Heart left ventricle (tissue), 16 donors: ENCODE measurements at regions of chr10 and their contacts with region 1.

Region 1: GRCh38 chr10:3785257-3785850 is 345 bp upstream of the KLF6 start:
- DNase-seq: peak; percentile 99 to 100 (median 99)
- ATAC-seq: peak; percentile 80 to 91 (median 82)
- H3K4me3 ChIP-seq: peak overlapping the region; percentile 66 to 100 (median 96)
- H3K27ac ChIP-seq: peak overlapping the region; percentile 98 to 100 (median 100)
- H3K4me1 ChIP-seq: peaks cover 0 to 35% (median 20%) of the 10 kb centered on the region in 12 donors
- H3K27me3 ChIP-seq: no peaks in the 10 kb centered on the region
- CTCF ChIP-seq: peak in 1 of 12 donors; percentile 21
- POLR2A ChIP-seq: peak; percentile 99 to 100

Region 2: DNA sequence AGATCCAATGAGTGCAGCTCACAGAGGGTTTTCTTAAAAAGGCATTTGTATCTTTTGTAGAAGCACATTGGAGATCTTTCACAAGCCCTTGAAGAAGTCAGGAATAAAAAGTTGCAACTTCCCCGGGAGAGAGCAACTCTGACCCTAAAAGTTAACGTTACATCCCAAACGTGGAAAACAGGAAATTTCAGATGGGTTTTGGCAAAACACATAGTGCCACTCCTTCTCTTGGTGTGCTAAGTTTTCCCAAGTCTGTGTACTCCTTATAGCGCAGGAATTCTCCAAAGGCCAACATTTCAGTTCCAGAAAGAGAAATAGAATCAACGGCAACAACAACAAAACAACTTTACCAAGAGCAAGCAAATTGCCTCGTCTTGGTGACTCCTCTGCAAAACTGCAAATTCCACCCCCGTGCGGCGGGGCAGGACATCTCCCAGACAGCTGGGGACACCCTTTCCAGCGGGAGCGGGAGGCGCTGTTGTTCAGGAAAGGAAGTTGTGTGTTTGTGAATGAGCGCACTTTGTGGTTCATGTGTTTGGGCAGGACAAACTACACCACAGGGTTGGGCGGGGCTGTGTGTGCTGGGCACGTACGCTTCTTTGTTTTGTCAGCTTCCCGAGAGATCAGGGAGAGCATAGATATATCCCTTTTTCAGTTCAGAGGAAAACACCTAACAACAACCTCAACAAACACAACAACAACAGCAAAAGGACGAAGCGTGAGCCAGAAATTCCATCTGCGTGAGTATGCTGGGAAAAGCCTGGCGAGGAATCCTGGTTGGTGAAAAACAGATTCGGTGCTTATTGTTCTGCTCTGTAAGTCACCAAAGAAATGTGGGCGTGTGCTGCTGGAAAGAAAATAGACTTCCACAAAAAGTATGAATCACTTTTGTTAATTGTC is 318.1 kb before region 1 on chr10:
- intact Hi-C with region 1: loop called in 5 of 10 experiments (anchors 5 to 10 kb)
- DNase-seq: peak; percentile 80 to 90 (median 85)
- ATAC-seq: peak; percentile 60 to 85 (median 82)
- H3K4me3 ChIP-seq: peak overlapping the region in 9 of 12 donors; percentile 4 to 40 (median 29)
- H3K27ac ChIP-seq: peak overlapping the region; percentile 74 to 97 (median 92)
- H3K4me1 ChIP-seq: peaks cover 0 to 69% (median 46%) of the 10 kb centered on the region in 12 donors
- H3K27me3 ChIP-seq: no peaks in the 10 kb centered on the region
- CTCF ChIP-seq: peak; percentile 35 to 75 (median 54)
- POLR2A ChIP-seq: no peak

Region 3: GRCh38 chr10:3749600-3749999 is 35.8 kb before region 1 on chr10:
- intact Hi-C with region 1: loop called in 2 of 10 experiments (anchors 5 kb)
- DNase-seq: peak in 1 of 5 donors; percentile 65
- ATAC-seq: peak; percentile 75 to 85 (median 78)
- H3K4me3 ChIP-seq: peak overlapping the region in 9 of 12 donors; percentile 24 to 45 (median 37)
- H3K27ac ChIP-seq: peak overlapping the region; percentile 29 to 90 (median 68)
- H3K4me1 ChIP-seq: peaks cover 7 to 50% (median 32%) of the 10 kb centered on the region in 12 donors
- H3K27me3 ChIP-seq: no peaks in the 10 kb centered on the region
- CTCF ChIP-seq: no peak
- POLR2A ChIP-seq: no peak

Region 4: GRCh38 chr10:3902054-3902808 is 116.9 kb after region 1 on chr10:
- intact Hi-C with region 1: loop called in 2 of 10 experiments (anchors 5 to 10 kb)
- DNase-seq: peak in 2 of 5 donors; percentile 33 to 42
- ATAC-seq: peak; percentile 41 to 81 (median 70)
- H3K4me3 ChIP-seq: no peak overlapping the region
- H3K27ac ChIP-seq: peak overlapping the region in 6 of 12 donors; percentile 10 to 62 (median 42)
- H3K4me1 ChIP-seq: peaks cover 0 to 19% (median 9%) of the 10 kb centered on the region in 12 donors
- H3K27me3 ChIP-seq: no peaks in the 10 kb centered on the region
- CTCF ChIP-seq: no peak
- POLR2A ChIP-seq: no peak

Region 5: DNA sequence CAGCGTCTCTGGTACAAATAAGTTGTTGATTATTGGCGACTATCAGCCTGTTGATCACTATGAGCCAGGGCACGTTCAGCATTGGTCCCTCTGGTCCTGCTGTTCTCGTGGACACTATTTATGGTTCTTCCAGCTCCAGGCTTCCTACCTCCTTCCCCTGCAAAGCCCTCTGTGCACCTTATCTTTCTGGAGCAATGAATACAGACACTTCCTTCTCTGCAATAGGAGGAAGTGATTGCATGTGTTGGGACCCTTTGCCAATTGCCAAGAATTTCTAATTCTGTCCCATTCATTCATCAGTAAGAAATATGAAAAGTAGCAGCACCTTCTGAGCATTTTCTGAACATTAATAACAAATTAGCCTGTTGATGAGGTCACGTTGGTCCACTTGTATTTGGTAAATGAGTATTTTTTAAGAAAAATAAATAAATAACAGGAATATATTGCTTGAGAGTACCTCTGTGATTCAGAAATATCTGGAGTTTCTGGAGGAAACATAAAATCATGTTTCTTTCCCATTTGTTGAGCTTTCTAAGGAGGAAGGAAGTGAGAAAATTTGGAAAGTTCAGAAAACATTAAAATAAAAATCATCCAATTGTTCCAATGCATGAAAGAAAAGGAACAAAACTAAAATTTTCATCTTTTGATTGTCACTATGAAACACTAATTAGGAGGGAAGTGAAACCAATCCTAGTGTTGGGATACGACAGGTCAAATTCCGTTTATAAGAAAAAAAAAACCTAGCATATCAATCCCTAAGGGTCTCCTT is 258.7 kb after region 1 on chr10:
- intact Hi-C with region 1: no loop called
- DNase-seq: peak in 1 of 5 donors; percentile 21
- ATAC-seq: peak; percentile 31 to 87 (median 60)
- H3K4me3 ChIP-seq: no peak overlapping the region
- H3K27ac ChIP-seq: peak overlapping the region in 4 of 12 donors; percentile 26 to 46 (median 40)
- H3K4me1 ChIP-seq: peaks cover 0 to 16% (median 0%) of the 10 kb centered on the region in 12 donors
- H3K27me3 ChIP-seq: no peaks in the 10 kb centered on the region
- CTCF ChIP-seq: no peak
- POLR2A ChIP-seq: no peak

Region 6: GRCh38 chr10:4283846-4284610 is 498.7 kb after region 1 on chr10:
- intact Hi-C with region 1: loop called in 1 of 10 experiments (anchors 10 kb)
- DNase-seq: peak; percentile 77 to 82 (median 78)
- ATAC-seq: peak; percentile 91 to 94 (median 94)
- H3K4me3 ChIP-seq: no peak overlapping the region
- H3K27ac ChIP-seq: peak overlapping the region; percentile 51 to 87 (median 70)
- H3K4me1 ChIP-seq: peaks cover 0 to 53% (median 21%) of the 10 kb centered on the region in 12 donors
- H3K27me3 ChIP-seq: no peaks in the 10 kb centered on the region
- CTCF ChIP-seq: no peak
- POLR2A ChIP-seq: no peak

Region 7: GRCh38 chr10:4663162-4663904 is 878.0 kb after region 1 on chr10:
- intact Hi-C with region 1: loop called in 7 of 10 experiments (anchors 2 to 10 kb)
- DNase-seq: peak in 4 of 5 donors; percentile 77 to 85 (median 80)
- ATAC-seq: peak; percentile 84 to 95 (median 92)
- H3K4me3 ChIP-seq: peak overlapping the region in 6 of 12 donors; percentile 3 to 27 (median 10)
- H3K27ac ChIP-seq: peak overlapping the region; percentile 88 to 99 (median 92)
- H3K4me1 ChIP-seq: peaks cover 10 to 44% (median 34%) of the 10 kb centered on the region in 12 donors
- H3K27me3 ChIP-seq: no peaks in the 10 kb centered on the region
- CTCF ChIP-seq: no peak
- POLR2A ChIP-seq: peak in 1 of 2 donors; percentile 7